ENCODE measurements at regions of chr1 and their contacts with region 1.

Region 1: GRCh38 chr1:244835276-244836134 is at the start of gene COX20:
- DNase-seq: peak; percentile 90
- ATAC-seq: peak; percentile 70
- H3K4me3 Mint-ChIP-seq: peak within 1 kb of the TSS; percentile 93
- H3K27ac Mint-ChIP-seq: peak within 1 kb of the TSS; percentile 99
- H3K4me1 Mint-ChIP-seq: peaks cover 50% of the 10 kb centered on the region
- H3K27me3 Mint-ChIP-seq: no peaks in the 10 kb centered on the region
- total RNA-seq, gene COX20: 31.3 to 33.6 TPM

Region 2: DNA sequence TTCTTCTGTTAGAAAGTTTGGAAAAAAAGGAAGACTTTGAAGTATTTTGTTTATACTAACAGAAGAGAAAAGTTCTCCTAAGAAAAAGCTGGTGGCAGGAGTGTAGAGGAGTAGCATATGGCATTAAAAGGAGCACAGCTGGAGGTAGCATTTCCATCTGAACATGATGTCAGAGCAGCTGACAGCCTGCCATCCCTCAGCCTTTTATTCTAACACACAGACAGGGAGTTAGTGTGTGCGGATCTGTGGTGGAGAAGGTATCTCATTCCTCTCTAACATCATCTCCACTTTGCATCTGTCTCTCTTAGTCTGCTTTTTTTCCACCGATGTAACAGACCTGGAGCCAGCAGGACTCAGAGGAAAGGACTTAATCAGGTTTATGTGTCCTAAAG is 784.5 kb before region 1 on chr1 and contains the start of gene ZBTB18:
- CTCF ChIA-PET with region 1: no interaction called
- POLR2A ChIA-PET with region 1: no interaction called
- DNase-seq: no peak
- ATAC-seq: no peak
- H3K4me3 Mint-ChIP-seq: peak within 1 kb of the TSS; percentile 97
- H3K27ac Mint-ChIP-seq: peak within 1 kb of the TSS; percentile 58
- H3K4me1 Mint-ChIP-seq: peaks cover 20% of the 10 kb centered on the region
- H3K27me3 Mint-ChIP-seq: peaks cover 13% of the 10 kb centered on the region
- total RNA-seq, gene ZBTB18: 11.0 to 11.7 TPM

Region 3: GRCh38 chr1:244652699-244653466 is 182.6 kb before region 1 on chr1 and contains the start of gene DESI2:
- CTCF ChIA-PET with region 1: interaction called, 3 read pairs
- POLR2A ChIA-PET with region 1: interaction called, 13 read pairs
- DNase-seq: peak; percentile 99
- ATAC-seq: peak; percentile 93
- H3K4me3 Mint-ChIP-seq: peak within 1 kb of the TSS; percentile 80
- H3K27ac Mint-ChIP-seq: peak within 1 kb of the TSS; percentile 84
- H3K4me1 Mint-ChIP-seq: peaks cover 17% of the 10 kb centered on the region
- H3K27me3 Mint-ChIP-seq: no peaks in the 10 kb centered on the region
- total RNA-seq, gene DESI2: 29.1 to 34.3 TPM

Region 4: GRCh38 chr1:244801246-244801645 is 34.3 kb before region 1 on chr1:
- CTCF ChIA-PET with region 1: interaction called, 13 read pairs
- POLR2A ChIA-PET with region 1: interaction called, 3 read pairs
- DNase-seq: peak; percentile 65
- ATAC-seq: peak; percentile 78
- H3K4me3 Mint-ChIP-seq: no peak overlapping the region
- H3K27ac Mint-ChIP-seq: no peak overlapping the region
- H3K4me1 Mint-ChIP-seq: peaks cover 5% of the 10 kb centered on the region
- H3K27me3 Mint-ChIP-seq: peaks cover 5% of the 10 kb centered on the region

Region 5: DNA sequence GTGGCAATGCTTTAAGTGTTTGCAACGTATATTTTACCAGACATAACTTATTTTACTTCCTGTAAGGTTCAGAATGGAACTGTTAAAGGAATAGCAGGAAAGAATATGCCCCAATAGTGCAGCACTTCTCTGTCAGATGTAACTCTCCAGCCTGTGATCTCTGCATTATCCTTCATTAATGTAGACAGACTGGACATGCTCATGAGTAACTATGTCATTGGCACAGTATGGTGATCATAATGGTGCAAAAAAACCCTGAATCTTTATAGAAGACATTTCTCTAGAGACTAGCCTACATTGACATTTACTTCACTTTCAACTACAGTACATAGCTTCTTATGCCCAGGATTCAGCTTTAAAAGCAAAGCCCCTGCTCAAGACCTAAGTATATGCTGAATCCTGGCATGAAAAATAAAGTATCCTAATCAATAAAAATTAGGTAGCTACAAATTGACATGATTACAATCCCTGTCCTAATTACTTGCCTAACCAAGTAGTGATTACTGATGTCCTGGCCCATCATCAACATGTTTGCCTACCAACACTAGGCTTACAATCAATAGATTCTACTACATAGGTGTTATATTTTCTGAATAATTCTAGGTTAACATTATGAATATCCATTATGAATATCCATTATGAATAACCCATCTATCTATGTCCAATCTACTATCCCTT is 13.8 kb after region 1 on chr1:
- CTCF ChIA-PET with region 1: interaction called, 8 read pairs
- POLR2A ChIA-PET with region 1: interaction called, 163 read pairs
- DNase-seq: no peak
- ATAC-seq: no peak
- H3K4me3 Mint-ChIP-seq: no peak overlapping the region
- H3K27ac Mint-ChIP-seq: no peak overlapping the region
- H3K4me1 Mint-ChIP-seq: peaks cover 67% of the 10 kb centered on the region
- H3K27me3 Mint-ChIP-seq: no peaks in the 10 kb centered on the region

Region 6: DNA sequence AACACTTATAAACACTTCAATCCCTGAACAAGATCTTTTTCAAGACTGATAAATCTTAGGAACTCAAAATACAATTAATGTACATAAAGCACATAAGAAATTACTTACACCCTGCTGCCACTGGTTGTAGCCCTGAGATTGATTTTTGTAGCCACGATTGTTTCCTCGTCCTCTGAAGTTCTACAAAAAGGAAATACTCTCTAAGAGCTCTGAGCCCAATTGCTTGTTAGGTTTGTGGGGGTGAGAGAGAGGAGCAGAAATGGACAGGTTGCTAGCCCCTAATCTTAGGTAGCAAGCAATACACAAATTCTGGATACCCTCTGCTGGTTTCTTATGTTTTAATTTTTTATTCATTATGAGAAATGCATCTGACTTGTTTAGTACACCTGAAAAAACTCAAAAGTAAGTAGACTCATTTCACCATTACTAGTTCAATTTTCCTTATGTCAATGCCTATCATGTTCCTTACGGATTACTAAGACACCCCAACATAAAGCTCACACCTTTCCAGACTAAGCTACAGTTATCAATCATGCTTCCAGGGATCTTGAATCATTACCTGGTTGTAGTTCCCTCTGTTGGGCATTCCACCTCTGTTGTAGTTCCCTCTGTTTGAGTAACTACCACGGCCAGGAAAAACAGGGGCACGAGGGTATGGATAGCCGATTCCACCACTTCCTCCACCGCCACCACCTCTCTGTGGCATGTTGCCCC is 19.5 kb after region 1 on chr1:
- CTCF ChIA-PET with region 1: interaction called, 17 read pairs
- POLR2A ChIA-PET with region 1: interaction called, 163 read pairs
- DNase-seq: no peak
- ATAC-seq: peak; percentile 62
- H3K4me3 Mint-ChIP-seq: peak overlapping the region; percentile 48
- H3K27ac Mint-ChIP-seq: peak overlapping the region; percentile 72
- H3K4me1 Mint-ChIP-seq: peaks cover 83% of the 10 kb centered on the region
- H3K27me3 Mint-ChIP-seq: no peaks in the 10 kb centered on the region

Region 7: GRCh38 chr1:244864253-244865027 is 28.9 kb after region 1 on chr1 and contains the start of gene HNRNPU:
- CTCF ChIA-PET with region 1: interaction called, 21 read pairs
- POLR2A ChIA-PET with region 1: interaction called, 180 read pairs
- DNase-seq: peak; percentile 96
- ATAC-seq: peak; percentile 70
- H3K4me3 Mint-ChIP-seq: peak within 1 kb of the TSS; percentile 93
- H3K27ac Mint-ChIP-seq: peak within 1 kb of the TSS; percentile 96
- H3K4me1 Mint-ChIP-seq: peaks cover 36% of the 10 kb centered on the region
- H3K27me3 Mint-ChIP-seq: no peaks in the 10 kb centered on the region
- total RNA-seq, gene HNRNPU: 432 to 435 TPM

Region 8: DNA sequence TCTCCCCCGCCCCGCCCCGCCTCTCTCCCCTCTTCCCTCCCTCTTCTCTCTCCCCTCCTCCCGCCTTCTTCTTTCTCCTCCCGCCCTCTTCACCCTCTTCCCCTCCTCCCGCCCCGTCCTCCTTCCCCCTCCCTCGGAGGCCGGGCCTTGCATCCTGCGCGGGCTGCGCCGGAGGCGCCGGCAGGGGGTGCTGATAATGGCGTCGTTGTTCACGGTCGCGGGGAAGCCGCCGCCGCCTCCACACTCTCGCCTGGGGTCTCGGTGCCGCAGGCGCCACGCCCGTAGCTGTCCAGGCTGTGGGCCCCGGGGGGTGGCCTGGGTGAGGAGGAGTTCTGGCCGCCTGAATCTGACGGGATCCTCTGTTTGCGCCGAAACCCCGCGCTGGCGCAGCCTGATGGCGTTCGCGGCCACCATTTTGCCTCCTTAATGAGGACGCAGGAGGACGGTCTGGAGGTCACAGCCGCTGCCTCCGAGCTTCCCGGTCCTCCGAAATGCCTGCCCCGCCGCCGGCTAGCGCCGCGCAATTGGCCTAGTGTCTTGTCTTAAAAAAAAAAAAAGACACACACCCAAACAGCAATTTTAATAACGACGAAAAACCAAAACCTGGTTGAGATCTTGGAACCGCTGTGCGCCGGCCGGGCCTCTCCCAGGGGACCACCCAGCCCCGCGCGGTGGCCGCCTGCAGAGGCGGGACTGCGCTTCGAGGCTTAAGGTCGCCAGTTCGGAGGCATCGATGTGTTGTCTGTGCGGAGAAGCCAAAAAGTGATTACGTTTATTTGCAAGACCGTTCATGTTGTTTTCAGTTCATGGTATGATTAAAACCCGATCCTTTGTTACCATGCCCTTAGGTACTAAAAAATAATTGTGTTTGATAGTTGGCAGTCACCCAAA is 135.4 kb after region 1 on chr1:
- CTCF ChIA-PET with region 1: interaction called, 4 read pairs
- POLR2A ChIA-PET with region 1: interaction called, 41 read pairs
- DNase-seq: peak; percentile 94
- ATAC-seq: peak; percentile 83
- H3K4me3 Mint-ChIP-seq: peak overlapping the region; percentile 88
- H3K27ac Mint-ChIP-seq: peak overlapping the region; percentile 99
- H3K4me1 Mint-ChIP-seq: peaks cover 18% of the 10 kb centered on the region
- H3K27me3 Mint-ChIP-seq: no peaks in the 10 kb centered on the region

Measured in activated CD8-positive, alpha-beta T cell treated with anti-CD3 and anti-CD28 coated beads, Interleukin-2, amount 10 ng/mL, durations not matched to agents 7 days and 5 days (primary cell).